ENCODE measurements at regions of chrX and their contacts with region 1.

Region 1: GRCh38 chrX:99010957-99011356 is 1399.1 kb downstream of the PCDH19 start:
- DNase-seq: no peak
- ATAC-seq: no peak
- H3K4me3 ChIP-seq: no peak overlapping the region
- H3K27ac ChIP-seq: no peak overlapping the region
- H3K4me1 ChIP-seq: no peaks in the 10 kb centered on the region
- H3K27me3 ChIP-seq: no peaks in the 10 kb centered on the region
- CTCF ChIP-seq: no peak
- EP300 ChIP-seq: no peak
- POLR2A ChIP-seq: no peak
- RAD21 ChIP-seq: no peak

Region 2: GRCh38 chrX:98956011-98956410 is 54.9 kb before region 1 on chrX:
- CTCF ChIA-PET with region 1: no interaction called
- POLR2A ChIA-PET with region 1: no interaction called
- RAD21 ChIA-PET with region 1: no interaction called
- SMC1A ChIA-PET with region 1: no interaction called
- in situ Hi-C with region 1: no loop called
- intact Hi-C with region 1: loop called (anchors 10 kb)
- DNase-seq: no peak
- ATAC-seq: no peak
- H3K4me3 ChIP-seq: no peak overlapping the region
- H3K27ac ChIP-seq: no peak overlapping the region
- H3K4me1 ChIP-seq: no peaks in the 10 kb centered on the region
- H3K27me3 ChIP-seq: no peaks in the 10 kb centered on the region
- CTCF ChIP-seq: no peak
- EP300 ChIP-seq: no peak
- POLR2A ChIP-seq: no peak
- RAD21 ChIP-seq: no peak

Region 3: DNA sequence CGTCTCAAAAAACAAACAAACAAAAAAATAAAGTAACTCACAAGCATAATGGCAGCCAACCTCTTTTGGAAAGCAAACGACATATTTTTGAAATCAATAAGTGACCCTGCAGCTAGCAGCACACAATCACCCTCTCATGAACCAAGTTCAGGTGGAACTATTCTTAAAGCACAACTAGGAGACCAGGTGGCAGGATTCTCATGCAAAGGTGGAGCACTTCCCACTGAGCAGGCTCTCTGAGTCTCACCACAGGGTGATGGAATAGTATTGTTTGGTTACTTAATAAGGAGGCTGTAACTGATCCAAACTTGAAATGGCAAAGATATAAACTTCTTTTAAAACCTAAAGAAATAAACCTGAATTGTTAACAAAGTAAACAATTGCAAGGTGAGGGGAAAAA is 106.1 kb after region 1 on chrX:
- CTCF ChIA-PET with region 1: no interaction called
- POLR2A ChIA-PET with region 1: no interaction called
- RAD21 ChIA-PET with region 1: no interaction called
- SMC1A ChIA-PET with region 1: no interaction called
- in situ Hi-C with region 1: no loop called
- intact Hi-C with region 1: no loop called
- DNase-seq: no peak
- ATAC-seq: no peak
- H3K4me3 ChIP-seq: no peak overlapping the region
- H3K27ac ChIP-seq: no peak overlapping the region
- H3K4me1 ChIP-seq: no peaks in the 10 kb centered on the region
- H3K27me3 ChIP-seq: no peaks in the 10 kb centered on the region
- CTCF ChIP-seq: no peak
- EP300 ChIP-seq: no peak
- POLR2A ChIP-seq: no peak
- RAD21 ChIP-seq: no peak

Measured in GM12878 (cell line).